ENCODE measurements at regions of chr5 and their contacts with region 1.

Region 1: DNA sequence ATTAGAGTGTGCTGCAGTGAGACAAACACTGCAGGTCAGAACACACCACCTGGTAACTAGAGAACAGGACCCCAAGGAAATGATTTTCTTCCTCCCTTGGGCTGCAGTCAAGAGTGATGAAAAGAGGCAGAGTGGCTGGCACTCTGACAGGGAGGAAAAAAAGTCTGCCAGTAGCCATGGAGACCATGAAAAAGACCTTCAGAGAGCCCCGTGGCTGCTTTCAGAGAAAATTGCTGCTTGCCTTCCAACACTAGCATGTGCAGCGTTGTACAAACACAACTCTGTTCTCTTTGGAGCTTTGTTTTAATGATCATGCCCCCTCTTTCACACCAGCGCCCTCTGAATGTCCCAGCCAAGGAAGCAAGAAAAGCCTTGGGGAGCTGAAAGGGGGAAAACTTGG is 68.8 kb downstream of the ANKRD55 start:
- DNase-seq: no peak
- ATAC-seq: no peak
- H3K4me3 Mint-ChIP-seq: no peak overlapping the region
- H3K27ac Mint-ChIP-seq: no peak overlapping the region
- H3K4me1 Mint-ChIP-seq: peaks cover 59% of the 10 kb centered on the region
- H3K27me3 Mint-ChIP-seq: no peaks in the 10 kb centered on the region

Region 2: DNA sequence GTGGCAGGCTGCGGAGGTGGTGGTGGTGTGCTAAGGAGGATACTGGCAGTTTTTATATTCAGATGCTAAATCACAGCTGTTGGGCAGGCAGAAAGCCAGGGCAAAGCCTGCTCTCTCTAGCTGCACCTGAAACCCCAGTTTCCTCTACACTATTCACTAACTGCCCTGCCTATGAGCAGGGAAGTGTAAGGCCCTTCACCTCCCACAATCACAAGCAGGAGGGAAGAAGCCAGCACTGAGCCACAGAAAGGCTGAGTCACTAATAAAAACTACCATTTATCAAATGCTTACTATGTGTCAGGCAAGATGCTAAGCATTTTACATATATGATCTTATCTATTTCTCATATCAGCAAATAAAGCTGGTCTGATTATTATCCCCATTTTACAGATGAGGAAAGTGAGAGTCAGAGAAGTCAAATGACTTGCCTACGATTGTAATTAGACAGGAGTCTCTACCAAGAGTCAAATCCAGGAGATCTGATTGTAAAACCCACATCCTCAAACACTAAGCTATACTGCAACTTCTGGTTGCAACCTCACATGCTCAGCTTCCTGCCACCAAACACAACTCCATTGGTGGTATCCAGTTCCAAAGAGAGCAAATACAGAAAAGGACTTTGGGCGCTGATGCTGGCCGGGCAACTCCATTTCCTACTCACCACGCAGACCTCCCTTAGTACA is 152.0 kb before region 1 on chr5:
- CTCF ChIA-PET with region 1: no interaction called
- POLR2A ChIA-PET with region 1: interaction called, 13 read pairs
- intact Hi-C with region 1: no loop called
- DNase-seq: peak; percentile 57
- ATAC-seq: peak; percentile 74
- H3K4me3 Mint-ChIP-seq: peak overlapping the region; percentile 3
- H3K27ac Mint-ChIP-seq: peak overlapping the region; percentile 61
- H3K4me1 Mint-ChIP-seq: peaks cover 48% of the 10 kb centered on the region
- H3K27me3 Mint-ChIP-seq: no peaks in the 10 kb centered on the region

Region 3: GRCh38 chr5:56080375-56081052 is 83.9 kb before region 1 on chr5:
- CTCF ChIA-PET with region 1: interaction called, 3 read pairs
- POLR2A ChIA-PET with region 1: no interaction called
- intact Hi-C with region 1: loop called in 1 of 2 experiments (anchors 2 kb)
- DNase-seq: peak; percentile 46
- ATAC-seq: peak; percentile 71
- H3K4me3 Mint-ChIP-seq: peak overlapping the region; percentile 43
- H3K27ac Mint-ChIP-seq: peak overlapping the region; percentile 92
- H3K4me1 Mint-ChIP-seq: peaks cover 54% of the 10 kb centered on the region
- H3K27me3 Mint-ChIP-seq: no peaks in the 10 kb centered on the region

Region 4: GRCh38 chr5:56257010-56257409 is 92.6 kb after region 1 on chr5:
- CTCF ChIA-PET with region 1: no interaction called
- POLR2A ChIA-PET with region 1: interaction called, 16 read pairs
- intact Hi-C with region 1: no loop called
- DNase-seq: no peak
- ATAC-seq: no peak
- H3K4me3 Mint-ChIP-seq: no peak overlapping the region
- H3K27ac Mint-ChIP-seq: no peak overlapping the region
- H3K4me1 Mint-ChIP-seq: no peaks in the 10 kb centered on the region
- H3K27me3 Mint-ChIP-seq: no peaks in the 10 kb centered on the region